ENCODE measurements at regions of chr4 and their contacts with region 1.

Region 1: DNA sequence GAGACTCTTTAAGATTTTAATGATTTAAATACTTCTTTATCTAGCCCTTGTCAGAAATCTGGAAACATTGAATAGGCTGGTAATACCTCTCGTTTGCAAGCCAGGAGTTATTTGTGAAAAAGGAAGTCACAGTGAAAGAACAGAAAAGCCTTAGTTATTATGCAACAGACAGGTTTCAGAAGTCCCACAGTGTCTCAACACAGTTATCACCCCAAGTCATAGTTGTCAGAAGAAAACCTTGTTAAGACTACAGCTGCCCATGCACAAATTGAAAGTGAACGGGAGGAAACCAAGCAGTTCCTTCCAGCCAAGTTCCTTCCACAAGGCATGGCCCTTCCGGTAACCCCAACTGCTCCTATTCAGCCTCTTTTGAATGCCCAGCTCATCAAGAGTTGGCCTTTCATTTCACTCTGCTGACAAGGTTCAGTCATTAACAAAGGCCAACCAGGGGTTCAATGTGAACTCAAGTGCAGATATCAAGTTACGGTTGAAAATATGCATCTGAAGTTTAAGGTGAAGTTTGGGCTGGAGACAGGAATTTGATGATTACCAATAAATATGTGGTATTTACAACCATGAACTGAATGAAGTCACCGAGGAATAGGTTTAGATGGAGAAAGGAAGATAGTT is 15.6 kb downstream of the ALPK1 start:
- DNase-seq: peak; percentile 67
- H3K4me3 ChIP-seq: peak overlapping the region; percentile 37
- H3K27ac ChIP-seq: peak overlapping the region; percentile 79
- H3K4me1 ChIP-seq: peaks cover 28% of the 10 kb centered on the region
- CTCF ChIP-seq: no peak

Region 2: GRCh38 chr4:112296949-112297880 is 15.5 kb before region 1 on chr4 and contains the start of gene ALPK1:
- CTCF ChIA-PET with region 1: interaction called, 5 read pairs
- POLR2A ChIA-PET with region 1: interaction called, 45 read pairs
- intact Hi-C with region 1: no loop called
- DNase-seq: peak; percentile 81
- H3K4me3 ChIP-seq: peak within 1 kb of the TSS; percentile 71
- H3K27ac ChIP-seq: peak within 1 kb of the TSS; percentile 62
- H3K4me1 ChIP-seq: peaks cover 33% of the 10 kb centered on the region
- CTCF ChIP-seq: no peak
- total RNA-seq, gene ALPK1: 22.5 and 33.7 TPM in 2 replicates

Region 3: GRCh38 chr4:112302320-112303274 is 10.1 kb before region 1 on chr4:
- CTCF ChIA-PET with region 1: no interaction called
- POLR2A ChIA-PET with region 1: interaction called, 45 read pairs
- intact Hi-C with region 1: no loop called
- DNase-seq: no peak
- H3K4me3 ChIP-seq: no peak overlapping the region
- H3K27ac ChIP-seq: no peak overlapping the region
- H3K4me1 ChIP-seq: peaks cover 32% of the 10 kb centered on the region
- CTCF ChIP-seq: no peak

Region 4: DNA sequence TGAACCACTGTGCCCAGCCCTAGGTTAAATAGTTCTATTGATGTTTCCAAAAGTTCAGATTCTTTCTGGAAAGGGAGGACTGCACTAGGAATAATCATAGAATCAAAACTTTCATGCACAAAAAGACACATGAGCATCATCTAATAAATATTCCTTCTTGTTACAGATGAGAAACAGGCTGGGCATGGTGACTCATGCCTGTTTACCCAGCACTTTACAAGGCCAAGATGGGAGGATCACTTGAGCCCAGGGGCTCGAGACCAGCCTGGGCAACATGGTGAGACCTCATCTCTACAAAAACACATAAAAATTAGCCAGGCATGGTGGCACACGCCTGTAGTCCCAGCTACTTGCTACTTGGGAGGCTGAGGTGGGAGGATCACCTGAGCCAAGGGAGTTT is 351.9 kb after region 1 on chr4:
- CTCF ChIA-PET with region 1: no interaction called
- POLR2A ChIA-PET with region 1: no interaction called
- intact Hi-C with region 1: no loop called
- DNase-seq: no peak
- H3K4me3 ChIP-seq: no peak overlapping the region
- H3K27ac ChIP-seq: no peak overlapping the region
- H3K4me1 ChIP-seq: no peaks in the 10 kb centered on the region
- CTCF ChIP-seq: no peak

Measured in OCI-LY7 (cell line).